Natural killer cell (primary cell): ENCODE measurements at regions of chr2 and their contacts with region 1.

Region 1: GRCh38 chr2:71226965-71227560 is at the start of gene PAIP2B:
- DNase-seq: peak; percentile 94 to 99
- ATAC-seq: peak; percentile 89 to 95 (median 91)
- H3K4me3 ChIP-seq: peak within 1 kb of the TSS; percentile 63
- H3K4me3 Mint-ChIP-seq: peak within 1 kb of the TSS; percentile 96
- H3K27ac ChIP-seq: peak within 1 kb of the TSS; percentile 61
- H3K27ac Mint-ChIP-seq: peak within 1 kb of the TSS; percentile 87
- H3K4me1 ChIP-seq: peaks cover 12% of the 10 kb centered on the region
- H3K4me1 Mint-ChIP-seq: peaks cover 14 to 15% of the 10 kb centered on the region in 2 donors
- H3K27me3 ChIP-seq: no peaks in the 10 kb centered on the region
- H3K27me3 Mint-ChIP-seq: peaks cover 4 to 16% of the 10 kb centered on the region in 2 donors
- CTCF ChIP-seq: no peak
- total RNA-seq, gene PAIP2B: 1.9 to 3.4 (median 3.2) TPM

Region 2: DNA sequence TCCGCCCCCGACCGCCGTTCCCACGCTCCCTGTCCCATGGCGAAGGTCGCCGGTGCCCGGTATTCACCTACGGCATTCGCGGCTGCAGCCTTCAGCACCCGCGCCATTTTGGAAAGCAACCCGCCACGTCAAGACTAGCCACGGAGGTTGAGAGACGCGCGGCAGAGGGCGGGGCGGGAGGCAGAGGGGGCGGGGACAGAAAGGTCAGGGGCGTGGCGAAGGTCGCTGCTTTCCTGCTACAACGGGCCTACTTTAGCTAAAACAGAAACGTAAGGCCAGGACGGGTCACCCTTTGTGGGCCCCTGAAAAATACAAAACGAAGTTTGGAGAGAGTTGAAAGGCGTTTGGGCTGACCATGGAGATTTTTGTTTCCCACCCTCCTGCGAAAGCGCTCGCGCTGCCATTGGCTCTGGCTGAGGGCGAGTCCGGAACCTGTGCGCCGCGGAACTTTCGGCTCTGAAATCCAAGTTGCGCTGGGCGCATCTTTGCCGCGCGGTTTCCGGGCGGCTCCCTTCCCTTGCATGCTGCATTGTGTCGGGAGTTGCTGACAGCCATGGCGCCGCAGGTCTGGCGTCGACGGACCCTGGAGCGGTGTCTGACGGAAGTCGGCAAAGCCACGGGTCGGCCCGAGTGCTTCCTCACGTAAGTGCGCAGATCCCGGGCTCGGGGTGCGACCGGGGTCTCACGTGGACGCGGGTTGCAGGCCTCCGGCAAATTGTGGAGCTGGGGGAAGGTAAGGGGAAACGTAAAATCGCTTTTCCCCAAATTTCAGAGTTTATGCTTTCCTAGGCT is 96.8 kb before region 1 on chr2 and contains the starts of genes MCEE and MPHOSPH10:
- intact Hi-C with region 1: loop called (anchors 5 kb)
- DNase-seq: peak; percentile 82 to 93
- ATAC-seq: peak; percentile 91 to 97 (median 91)
- H3K4me3 ChIP-seq: peak within 1 kb of the TSS; percentile 89
- H3K4me3 Mint-ChIP-seq: no peak within 1 kb of the TSS
- H3K27ac ChIP-seq: peak within 1 kb of the TSS; percentile 80
- H3K27ac Mint-ChIP-seq: no peak within 1 kb of the TSS
- H3K4me1 ChIP-seq: peaks cover 17% of the 10 kb centered on the region
- H3K4me1 Mint-ChIP-seq: peaks cover 8 to 13% of the 10 kb centered on the region in 2 donors
- H3K27me3 ChIP-seq: no peaks in the 10 kb centered on the region
- H3K27me3 Mint-ChIP-seq: no peaks in the 10 kb centered on the region
- CTCF ChIP-seq: no peak
- total RNA-seq, gene MCEE: 8.4 to 10.4 (median 8.7) TPM
- total RNA-seq, gene MPHOSPH10: 27.9 to 34.2 (median 31.4) TPM

Region 3: GRCh38 chr2:71276311-71277146 is 49.5 kb after region 1 on chr2:
- intact Hi-C with region 1: loop called (anchors 1 kb)
- DNase-seq: peak; percentile 88
- ATAC-seq: peak; percentile 98 to 99 (median 98)
- H3K4me3 ChIP-seq: peak overlapping the region; percentile 65
- H3K4me3 Mint-ChIP-seq: peak overlapping the region; percentile 80
- H3K27ac ChIP-seq: no peak overlapping the region
- H3K27ac Mint-ChIP-seq: no peak overlapping the region
- H3K4me1 ChIP-seq: peaks cover 21% of the 10 kb centered on the region
- H3K4me1 Mint-ChIP-seq: peaks cover 10 to 16% of the 10 kb centered on the region in 2 donors
- H3K27me3 ChIP-seq: peaks cover 14% of the 10 kb centered on the region
- H3K27me3 Mint-ChIP-seq: peaks cover 54 to 75% of the 10 kb centered on the region in 2 donors
- CTCF ChIP-seq: no peak